ENCODE measurements at regions of chr10 and their contacts with region 1.

Region 1: DNA sequence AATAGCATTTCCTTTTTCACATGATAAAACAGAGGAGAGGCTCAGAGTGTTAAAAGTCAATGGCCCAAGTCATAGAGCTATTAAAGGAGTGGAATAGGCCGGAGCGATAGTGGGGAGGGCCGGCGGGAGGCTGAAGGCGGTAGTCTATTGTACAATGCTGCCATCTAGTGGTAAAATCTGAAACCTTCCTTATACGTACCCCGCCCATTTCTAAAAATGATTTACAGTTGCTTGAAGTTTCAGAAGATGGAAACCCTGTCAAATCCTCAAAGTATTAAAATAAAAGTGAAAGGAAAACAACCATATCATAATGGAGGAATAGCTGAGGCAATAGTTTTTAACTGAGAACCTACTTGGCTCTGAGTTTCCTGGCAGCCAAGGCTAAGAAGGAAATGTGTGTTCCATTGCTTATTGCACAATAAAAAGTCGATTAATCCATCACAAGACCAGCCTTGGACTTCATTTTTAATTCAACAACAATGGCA is 209.1 kb downstream of the CCSER2 start:
- DNase-seq: peak; percentile 24 to 53 (median 35)
- H3K4me3 ChIP-seq: no peak overlapping the region
- H3K27ac ChIP-seq: no peak overlapping the region
- H3K4me1 ChIP-seq: no peaks in the 10 kb centered on the region
- H3K27me3 ChIP-seq: no peaks in the 10 kb centered on the region
- CTCF ChIP-seq: peak; percentile 66 to 93 (median 75)
- EP300 ChIP-seq: no peak
- POLR2A ChIP-seq: no peak

Region 2: GRCh38 chr10:84194424-84195040 is 343.0 kb before region 1 on chr10 and contains the start of gene CDHR1:
- intact Hi-C with region 1: loop called in 1 of 4 experiments (anchors 5 kb)
- DNase-seq: no peak
- H3K4me3 ChIP-seq: peak within 1 kb of the TSS; percentile 19
- H3K27ac ChIP-seq: no peak within 1 kb of the TSS
- H3K4me1 ChIP-seq: no peaks in the 10 kb centered on the region
- H3K27me3 ChIP-seq: no peaks in the 10 kb centered on the region
- CTCF ChIP-seq: no peak
- EP300 ChIP-seq: no peak
- POLR2A ChIP-seq: no peak
- total RNA-seq, gene CDHR1: 0.08 to 2.2 (median 0.69) TPM

Region 3: DNA sequence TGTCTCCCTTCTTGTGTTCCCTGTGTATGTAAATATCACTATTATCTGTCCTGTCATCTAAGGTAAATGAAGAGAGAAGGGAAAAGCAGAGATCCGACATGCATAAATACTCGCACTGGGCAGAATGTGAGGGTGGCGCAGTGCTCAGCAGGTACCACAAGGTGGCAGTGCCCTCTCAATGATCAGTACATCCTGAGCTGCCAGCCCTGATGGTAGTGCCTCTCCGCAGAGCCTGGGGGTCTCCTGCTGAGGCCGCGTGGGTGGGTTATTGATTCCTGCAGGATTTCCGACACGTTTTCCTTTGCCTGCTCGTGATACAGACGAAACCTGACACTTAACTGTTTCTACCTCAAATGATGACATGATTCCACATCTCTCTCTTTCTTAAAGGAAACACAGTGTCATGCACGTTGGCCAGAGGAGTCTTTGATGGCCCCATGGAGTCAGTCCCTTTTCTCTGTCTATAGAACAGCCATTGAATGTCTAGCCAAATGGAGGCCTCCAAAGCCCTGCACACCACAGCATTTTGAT is 272.8 kb before region 1 on chr10:
- intact Hi-C with region 1: loop called (anchors 2 to 5 kb)
- DNase-seq: peak; percentile 30 to 69 (median 62)
- H3K4me3 ChIP-seq: no peak overlapping the region
- H3K27ac ChIP-seq: no peak overlapping the region
- H3K4me1 ChIP-seq: peaks cover 1% of the 10 kb centered on the region
- H3K27me3 ChIP-seq: no peaks in the 10 kb centered on the region
- CTCF ChIP-seq: peak; percentile 58 to 79 (median 65)
- EP300 ChIP-seq: no peak
- POLR2A ChIP-seq: no peak

Region 4: GRCh38 chr10:84375011-84375410 is 162.5 kb before region 1 on chr10:
- intact Hi-C with region 1: loop called (anchors 5 kb)
- DNase-seq: peak in 1 of 5 donors; percentile 37
- H3K4me3 ChIP-seq: no peak overlapping the region
- H3K27ac ChIP-seq: no peak overlapping the region
- H3K4me1 ChIP-seq: no peaks in the 10 kb centered on the region
- H3K27me3 ChIP-seq: no peaks in the 10 kb centered on the region
- CTCF ChIP-seq: peak in 2 of 3 donors; percentile 54 to 60
- EP300 ChIP-seq: no peak
- POLR2A ChIP-seq: no peak

Region 5: DNA sequence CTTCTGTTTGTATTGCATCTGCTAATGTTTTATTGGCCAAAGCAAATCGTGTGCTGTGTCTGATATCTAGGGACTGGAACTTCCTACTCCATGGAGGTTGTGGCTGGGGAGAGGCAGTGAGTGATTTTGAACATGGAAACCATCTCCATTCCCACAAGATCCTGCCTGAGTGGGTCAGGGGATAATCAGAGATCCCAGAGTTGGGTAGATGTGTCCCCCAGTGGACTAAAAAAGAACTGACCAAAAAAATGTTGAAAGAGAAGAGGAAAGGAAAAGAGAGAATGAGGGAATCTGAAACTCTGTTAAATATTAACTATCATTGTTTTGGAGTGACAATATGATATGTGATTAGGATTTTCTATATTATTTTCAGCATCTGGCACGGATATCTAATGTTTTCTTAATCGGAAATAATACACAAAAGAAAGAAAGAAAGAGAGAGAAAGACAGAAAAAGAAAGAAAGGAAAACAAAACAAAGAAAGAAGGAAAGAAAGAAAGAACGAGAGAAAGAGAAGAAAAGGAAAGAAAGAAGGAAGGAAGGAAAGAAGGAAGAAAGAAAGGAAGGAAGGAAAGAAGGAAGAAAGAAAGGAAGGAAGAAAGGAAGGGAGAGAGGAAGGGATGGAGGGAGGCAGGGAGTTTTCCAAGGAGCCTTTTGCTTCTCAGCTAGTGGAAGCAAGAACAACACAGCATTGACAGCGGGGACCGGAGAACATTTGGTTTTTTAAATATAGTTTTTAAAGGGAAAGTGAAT is 429.4 kb after region 1 on chr10:
- intact Hi-C with region 1: no loop called
- DNase-seq: no peak
- H3K4me3 ChIP-seq: no peak overlapping the region
- H3K27ac ChIP-seq: no peak overlapping the region
- H3K4me1 ChIP-seq: no peaks in the 10 kb centered on the region
- H3K27me3 ChIP-seq: no peaks in the 10 kb centered on the region
- CTCF ChIP-seq: no peak
- EP300 ChIP-seq: no peak
- POLR2A ChIP-seq: no peak

Region 6: DNA sequence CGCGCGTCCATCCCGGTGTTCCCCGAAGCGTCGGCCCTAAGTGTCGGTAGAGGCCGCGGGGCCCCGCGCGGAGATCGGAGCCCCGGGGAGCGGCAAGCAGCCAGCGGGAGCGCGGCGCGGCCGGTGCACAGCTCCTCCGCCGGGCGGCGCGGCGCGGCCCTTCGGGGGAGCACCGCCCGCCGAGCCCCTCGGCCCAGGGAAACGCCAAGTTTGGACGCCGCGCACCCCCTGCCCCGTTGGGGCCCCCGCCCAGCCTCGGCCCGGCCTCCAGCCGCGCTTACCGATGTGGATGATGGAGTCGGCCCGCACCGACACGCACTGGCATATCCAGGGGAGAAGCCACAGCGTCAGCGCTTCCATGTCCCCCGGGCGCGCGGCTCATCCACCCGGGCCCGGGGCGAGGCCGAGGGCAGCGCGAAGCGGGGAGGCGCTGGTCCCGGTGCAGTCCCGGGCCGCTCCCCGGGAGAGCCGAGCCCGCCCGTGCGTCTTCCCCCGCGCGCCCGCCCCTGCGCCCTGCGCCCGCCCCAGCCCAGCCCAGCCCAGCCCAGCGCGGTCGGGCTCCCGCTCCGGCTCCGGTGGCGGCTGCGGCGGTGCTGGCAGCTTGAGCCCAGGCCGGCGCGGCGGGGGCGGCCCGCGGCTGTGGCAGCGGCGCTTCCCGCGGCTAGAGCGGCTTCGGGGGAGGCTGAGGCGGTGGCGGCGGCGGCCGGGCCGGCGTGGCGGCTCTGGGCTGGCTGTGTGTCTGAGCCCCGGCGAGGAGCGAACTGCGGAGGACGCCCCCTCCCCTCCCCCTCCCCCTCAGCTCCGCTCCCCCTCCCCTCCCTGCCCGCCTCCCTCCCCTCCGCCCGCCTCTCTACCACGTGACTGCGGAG is 1828.8 kb after region 1 on chr10 and contains the start of gene GRID1:
- intact Hi-C with region 1: loop called in 2 of 4 experiments (anchors 10 kb)
- DNase-seq: peak in 3 of 5 donors; percentile 38 to 43 (median 41)
- H3K4me3 ChIP-seq: peak within 1 kb of the TSS; percentile 47
- H3K27ac ChIP-seq: no peak within 1 kb of the TSS
- H3K4me1 ChIP-seq: peaks cover 2% of the 10 kb centered on the region
- H3K27me3 ChIP-seq: no peaks in the 10 kb centered on the region
- CTCF ChIP-seq: no peak
- EP300 ChIP-seq: no peak
- POLR2A ChIP-seq: no peak
- total RNA-seq, gene GRID1: 0.99 to 6.2 (median 1.8) TPM

Region 7: GRCh38 chr10:86376852-86377796 is 1839.6 kb after region 1 on chr10:
- intact Hi-C with region 1: loop called in 2 of 4 experiments (anchors 5 to 10 kb)
- DNase-seq: peak; percentile 38 to 82 (median 64)
- H3K4me3 ChIP-seq: no peak overlapping the region
- H3K27ac ChIP-seq: no peak overlapping the region
- H3K4me1 ChIP-seq: no peaks in the 10 kb centered on the region
- H3K27me3 ChIP-seq: no peaks in the 10 kb centered on the region
- CTCF ChIP-seq: peak; percentile 86 to 97 (median 96)
- EP300 ChIP-seq: no peak
- POLR2A ChIP-seq: no peak